Breast epithelium (tissue), 4 donors: ENCODE measurements at regions of chr15 and their contacts with region 1.

Region 1: GRCh38 chr15:38252481-38253412 is at the start of gene SPRED1:
- DNase-seq: peak; percentile 60 to 72
- H3K4me3 ChIP-seq: peak within 1 kb of the TSS; percentile 90 to 97 (median 93)
- H3K27ac ChIP-seq: peak within 1 kb of the TSS; percentile 99 to 100
- H3K4me1 ChIP-seq: peaks cover 0 to 5% of the 10 kb centered on the region in 2 donors
- H3K27me3 ChIP-seq: no peaks in the 10 kb centered on the region
- CTCF ChIP-seq: no peak
- POLR2A ChIP-seq: no peak
- total RNA-seq, gene SPRED1: 18.4 to 28.1 (median 22.3) TPM

Region 2: DNA sequence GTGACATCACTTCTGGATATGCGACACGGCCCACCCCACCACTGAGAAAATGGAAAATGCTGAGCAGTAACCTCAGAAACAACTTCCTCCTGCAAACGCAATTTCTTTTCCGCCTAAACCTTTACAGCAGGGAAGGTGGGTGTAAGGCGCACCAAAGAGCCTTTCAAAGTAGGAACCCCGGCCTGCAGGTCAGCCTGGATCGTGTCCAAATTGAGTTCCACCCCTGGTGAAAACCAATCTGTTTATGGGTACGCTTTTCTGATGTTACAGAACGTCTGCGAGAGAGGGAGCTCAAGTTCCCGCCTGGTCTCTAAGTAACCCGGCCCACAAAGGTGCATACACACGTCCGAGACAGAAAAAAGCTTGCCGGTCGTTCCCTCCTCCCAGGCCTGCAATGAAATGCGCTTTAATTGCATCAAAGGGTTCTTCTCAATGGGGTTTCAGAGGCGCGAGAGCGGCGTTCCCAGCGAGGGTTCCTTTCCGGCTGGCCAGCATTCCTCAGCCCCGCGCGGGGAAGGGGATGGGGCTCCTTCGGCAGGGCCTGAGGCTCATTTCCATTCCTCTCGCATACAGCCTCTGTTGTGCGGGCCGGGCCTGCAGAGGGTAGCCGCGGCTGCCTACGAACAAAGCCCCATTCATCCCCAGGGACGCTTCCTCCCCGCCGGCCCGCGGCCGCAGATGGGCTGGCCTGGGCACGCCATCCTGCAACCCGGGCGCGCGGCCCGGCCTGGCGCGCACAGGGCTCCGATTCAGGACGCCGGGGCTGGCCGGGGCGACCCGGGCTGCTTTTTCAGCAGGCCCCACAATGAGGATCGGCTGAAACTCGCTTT is 180.2 kb before region 1 on chr15:
- intact Hi-C with region 1: loop called (anchors 10 kb)
- DNase-seq: peak; percentile 78 to 89
- H3K4me3 ChIP-seq: peak overlapping the region; percentile 48 to 70 (median 53)
- H3K27ac ChIP-seq: peak overlapping the region; percentile 91 to 97
- H3K4me1 ChIP-seq: peaks cover 4 to 7% of the 10 kb centered on the region in 2 donors
- H3K27me3 ChIP-seq: no peaks in the 10 kb centered on the region
- CTCF ChIP-seq: no peak
- POLR2A ChIP-seq: peak; percentile 21